Left lung (tissue), 14 donors: ENCODE measurements at regions of chr3 and their contacts with region 1.

Region 1: GRCh38 chr3:194323785-194324735 is 27.1 kb downstream of the CPN2 start:
- DNase-seq: peak in 1 of 4 donors; percentile 68
- ATAC-seq: peak; percentile 22
- H3K4me3 ChIP-seq: peak overlapping the region in 1 of 2 donors; percentile 9
- H3K27ac ChIP-seq: no peak overlapping the region
- H3K4me1 ChIP-seq: peaks cover 0 to 6% of the 10 kb centered on the region in 2 donors
- H3K27me3 ChIP-seq: peaks cover 0 to 21% of the 10 kb centered on the region in 2 donors
- CTCF ChIP-seq: no peak

Region 2: DNA sequence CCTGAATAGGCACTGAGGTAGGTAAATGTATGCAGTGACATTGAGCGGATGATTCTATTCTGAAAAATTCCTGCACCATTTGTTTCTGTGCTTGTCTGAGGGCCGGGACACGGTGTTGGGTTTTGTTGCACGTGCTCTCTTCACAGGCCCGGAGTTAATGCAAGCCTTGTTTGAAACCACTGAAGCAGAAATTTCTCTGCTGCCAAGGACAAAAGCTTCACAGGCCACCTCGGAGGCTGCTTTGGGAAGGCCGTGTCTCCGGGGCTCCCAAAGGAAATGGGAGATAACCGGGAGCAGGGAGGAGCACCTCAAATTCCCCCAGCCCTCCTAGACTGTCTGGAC is 551.7 kb before region 1 on chr3:
- intact Hi-C with region 1: loop called in 1 of 2 experiments (anchors 10 kb)
- DNase-seq: no peak
- ATAC-seq: no peak
- H3K4me3 ChIP-seq: no peak overlapping the region
- H3K27ac ChIP-seq: no peak overlapping the region
- H3K4me1 ChIP-seq: peaks cover 0 to 3% of the 10 kb centered on the region in 2 donors
- H3K27me3 ChIP-seq: peaks cover 0 to 14% of the 10 kb centered on the region in 2 donors
- CTCF ChIP-seq: no peak